HCT116 (cell line): ENCODE measurements at regions of chr14 and their contacts with region 1.

Region 1: DNA sequence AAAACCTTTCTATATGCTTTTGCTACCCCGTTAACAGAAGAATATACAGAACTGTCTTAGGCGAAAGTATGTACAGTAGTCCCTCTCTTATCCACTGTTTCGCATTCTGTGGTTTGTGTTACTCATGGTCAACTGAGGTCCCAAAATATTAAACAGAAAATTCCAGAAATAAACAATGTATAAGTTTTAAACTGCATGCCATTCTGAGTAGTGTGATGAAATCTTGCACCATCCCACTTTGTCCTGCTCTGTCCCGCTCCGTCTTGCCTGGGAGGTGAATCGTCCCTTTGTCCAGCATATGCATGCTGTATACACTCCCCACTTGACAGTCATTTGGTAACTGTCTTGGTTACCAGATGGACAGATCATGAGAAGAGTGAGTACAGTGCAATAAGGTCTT is 70.1 kb upstream of the STRN3 start:
- DNase-seq: no peak
- ATAC-seq: no peak
- H3K4me3 ChIP-seq: no peak overlapping the region
- H3K27ac ChIP-seq: no peak overlapping the region
- H3K4me1 ChIP-seq: no peaks in the 10 kb centered on the region
- H3K27me3 ChIP-seq: no peaks in the 10 kb centered on the region
- CTCF ChIP-seq: no peak
- POLR2A ChIP-seq: no peak
- RAD21 ChIP-seq: no peak

Region 2: GRCh38 chr14:31137214-31137889 is 41.1 kb after region 1 on chr14:
- CTCF ChIA-PET with region 1: no interaction called
- POLR2A ChIA-PET with region 1: no interaction called
- RAD21 ChIA-PET with region 1: no interaction called
- intact Hi-C with region 1: loop called (anchors 5 kb)
- DNase-seq: peak; percentile 68
- ATAC-seq: peak; percentile 98
- H3K4me3 ChIP-seq: 0 out of 4 replicates have a peak overlapping the region, but pooled peaks of 1 of the 2 experiments have one; percentile 9
- H3K27ac ChIP-seq: peak overlapping the region; percentile 31
- H3K4me1 ChIP-seq: peaks cover 9 to 22% of the 10 kb centered on the region in 2 experiments
- H3K27me3 ChIP-seq: no peaks in the 10 kb centered on the region
- CTCF ChIP-seq: no peak
- POLR2A ChIP-seq: no peak
- RAD21 ChIP-seq: no peak; the same call in 1 of the 2 replicates

Region 3: GRCh38 chr14:31219169-31219568 is 122.9 kb after region 1 on chr14:
- CTCF ChIA-PET with region 1: no interaction called
- POLR2A ChIA-PET with region 1: no interaction called
- RAD21 ChIA-PET with region 1: no interaction called
- intact Hi-C with region 1: no loop called
- DNase-seq: no peak
- ATAC-seq: no peak
- H3K4me3 ChIP-seq: no peak overlapping the region
- H3K27ac ChIP-seq: no peak overlapping the region
- H3K4me1 ChIP-seq: no peaks in the 10 kb centered on the region
- H3K27me3 ChIP-seq: no peaks in the 10 kb centered on the region
- CTCF ChIP-seq: no peak
- POLR2A ChIP-seq: no peak
- RAD21 ChIP-seq: no peak

Region 4: DNA sequence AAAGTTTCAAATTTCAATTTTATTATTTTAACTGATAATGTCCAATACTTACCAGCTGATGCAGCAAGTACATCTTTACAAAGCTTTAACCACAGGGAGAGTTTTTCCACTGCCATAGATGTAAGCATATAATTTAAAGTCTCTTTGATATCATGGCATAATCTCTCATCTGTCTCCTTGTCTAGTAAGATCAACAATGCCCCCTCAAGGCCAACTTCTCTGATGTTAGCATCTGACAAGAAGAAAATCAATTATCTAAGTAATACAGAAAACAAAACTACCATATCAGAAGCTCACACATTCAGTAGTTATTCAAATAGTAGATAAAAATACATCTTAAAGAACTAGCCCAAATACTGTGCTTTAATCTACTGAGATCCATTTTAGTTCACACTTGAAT is 229.9 kb after region 1 on chr14:
- CTCF ChIA-PET with region 1: no interaction called
- POLR2A ChIA-PET with region 1: no interaction called
- RAD21 ChIA-PET with region 1: no interaction called
- intact Hi-C with region 1: loop called (anchors 5 kb)
- DNase-seq: peak; percentile 15
- ATAC-seq: no peak; the same call in 1 of the 2 replicates
- H3K4me3 ChIP-seq: no peak overlapping the region
- H3K27ac ChIP-seq: no peak overlapping the region
- H3K4me1 ChIP-seq: no peaks in the 10 kb centered on the region
- H3K27me3 ChIP-seq: no peaks in the 10 kb centered on the region
- CTCF ChIP-seq: peak; percentile 21 to 27 (median 26); a peak in 2 of 6 replicates
- POLR2A ChIP-seq: no peak
- RAD21 ChIP-seq: peak; percentile 75